Activated T-helper 1 cell treated with anti-CD3 and anti-CD28 coated beads, Interleukin-12 subunit alpha, Interleukin-12 subunit beta, Interleukin-2, Interleukin-4 antibody, amounts not matched to agents 30 ng/mL and 10 ng/mL and 1 ng/mL, durations not matched to agents 14 hours and 24 hours and 36 hours (primary cell): ENCODE measurements at regions of chr9 and their contacts with region 1.

Region 1: DNA sequence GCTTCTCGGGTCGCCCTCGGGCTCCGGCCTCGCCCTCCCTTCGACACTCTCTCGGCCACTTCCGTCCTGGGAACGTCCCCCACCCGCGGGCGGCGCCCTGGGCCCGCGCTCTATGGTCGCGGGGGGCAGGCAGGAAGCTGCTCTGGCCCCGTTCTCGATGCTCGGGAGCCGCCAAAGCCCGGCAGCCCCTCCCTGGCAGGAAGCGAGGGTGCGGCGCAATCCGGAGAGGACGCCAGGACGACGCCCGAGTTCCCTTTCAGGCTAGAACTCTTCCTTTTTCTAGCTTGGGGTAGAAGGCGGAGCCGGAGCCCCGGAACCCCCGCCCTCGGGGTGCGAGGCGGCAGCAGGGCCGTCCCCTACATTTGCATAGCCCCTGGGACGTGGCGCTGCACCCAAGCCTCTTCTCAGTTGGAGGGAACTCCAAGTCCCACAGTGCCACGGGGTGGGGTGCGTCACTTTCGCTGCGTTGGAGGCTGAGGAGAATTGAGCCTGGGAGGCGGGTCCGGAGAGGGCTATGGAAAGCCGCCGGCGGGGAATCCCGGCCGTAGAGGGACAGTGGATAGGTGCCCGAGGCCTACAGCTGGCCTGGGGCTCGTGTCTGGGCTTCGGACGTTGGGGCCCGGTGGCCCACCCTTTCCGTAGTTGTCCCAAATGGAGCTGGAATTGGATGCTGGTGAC is at the starts of genes CREB3 and TLN1:
- DNase-seq: peak; percentile 98
- H3K4me3 Mint-ChIP-seq: no peak within 1 kb of the TSS
- H3K27ac Mint-ChIP-seq: peak within 1 kb of the TSS; percentile 92
- H3K4me1 Mint-ChIP-seq: peaks cover 22% of the 10 kb centered on the region
- H3K27me3 Mint-ChIP-seq: no peaks in the 10 kb centered on the region
- total RNA-seq, gene CREB3: 32.1 and 32.6 TPM in 2 replicates
- total RNA-seq, gene TLN1: 229 and 230 TPM in 2 replicates

Region 2: GRCh38 chr9:35071814-35072460 is 660.3 kb before region 1 on chr9:
- intact Hi-C with region 1: loop called (anchors 1 kb)
- DNase-seq: peak; percentile 72
- H3K4me3 Mint-ChIP-seq: peak overlapping the region; percentile 95
- H3K27ac Mint-ChIP-seq: peak overlapping the region; percentile 92
- H3K4me1 Mint-ChIP-seq: peaks cover 55% of the 10 kb centered on the region
- H3K27me3 Mint-ChIP-seq: no peaks in the 10 kb centered on the region

Region 3: GRCh38 chr9:35303567-35303966 is 428.7 kb before region 1 on chr9:
- intact Hi-C with region 1: no loop called
- DNase-seq: no peak
- H3K4me3 Mint-ChIP-seq: no peak overlapping the region
- H3K27ac Mint-ChIP-seq: no peak overlapping the region
- H3K4me1 Mint-ChIP-seq: no peaks in the 10 kb centered on the region
- H3K27me3 Mint-ChIP-seq: peaks cover 35% of the 10 kb centered on the region

Region 4: GRCh38 chr9:35616681-35617459 is 115.4 kb before region 1 on chr9:
- intact Hi-C with region 1: loop called (anchors 1 kb)
- DNase-seq: peak; percentile 57
- H3K4me3 Mint-ChIP-seq: peak overlapping the region; percentile 69
- H3K27ac Mint-ChIP-seq: peak overlapping the region; percentile 92
- H3K4me1 Mint-ChIP-seq: peaks cover 65% of the 10 kb centered on the region
- H3K27me3 Mint-ChIP-seq: peaks cover 2% of the 10 kb centered on the region

Region 5: GRCh38 chr9:35690431-35691333 is 41.6 kb before region 1 on chr9:
- intact Hi-C with region 1: loop called (anchors 2 kb)
- DNase-seq: peak; percentile 9
- H3K4me3 Mint-ChIP-seq: peak overlapping the region; percentile 84
- H3K27ac Mint-ChIP-seq: peak overlapping the region; percentile 55
- H3K4me1 Mint-ChIP-seq: peaks cover 26% of the 10 kb centered on the region
- H3K27me3 Mint-ChIP-seq: peaks cover 2% of the 10 kb centered on the region

Region 6: GRCh38 chr9:35756275-35757225 is 24.3 kb after region 1 on chr9:
- intact Hi-C with region 1: loop called (anchors 1 kb)
- DNase-seq: peak; percentile 71
- H3K4me3 Mint-ChIP-seq: peak overlapping the region; percentile 100
- H3K27ac Mint-ChIP-seq: peak overlapping the region; percentile 98
- H3K4me1 Mint-ChIP-seq: peaks cover 51% of the 10 kb centered on the region
- H3K27me3 Mint-ChIP-seq: no peaks in the 10 kb centered on the region

Region 7: GRCh38 chr9:35882263-35882848 is 150.1 kb after region 1 on chr9:
- intact Hi-C with region 1: loop called (anchors 1 kb)
- DNase-seq: peak; percentile 55
- H3K4me3 Mint-ChIP-seq: no peak overlapping the region
- H3K27ac Mint-ChIP-seq: no peak overlapping the region
- H3K4me1 Mint-ChIP-seq: no peaks in the 10 kb centered on the region
- H3K27me3 Mint-ChIP-seq: peaks cover 22% of the 10 kb centered on the region